ENCODE measurements at regions of chr13 and their contacts with region 1.

Region 1: GRCh38 chr13:27251166-27252091 is at the start of gene RPL21:
- DNase-seq: peak; percentile 86
- H3K4me3 Mint-ChIP-seq: peak within 1 kb of the TSS; percentile 98
- H3K27ac Mint-ChIP-seq: peak within 1 kb of the TSS; percentile 99
- H3K4me1 Mint-ChIP-seq: peaks cover 35% of the 10 kb centered on the region
- H3K27me3 Mint-ChIP-seq: no peaks in the 10 kb centered on the region
- total RNA-seq, gene RPL21: 1,112 and 1,127 TPM in 2 replicates

Region 2: GRCh38 chr13:27043013-27043412 is 208.4 kb before region 1 on chr13:
- intact Hi-C with region 1: loop called (anchors 10 kb)
- DNase-seq: no peak
- H3K4me3 Mint-ChIP-seq: no peak overlapping the region
- H3K27ac Mint-ChIP-seq: no peak overlapping the region
- H3K4me1 Mint-ChIP-seq: peaks cover 28% of the 10 kb centered on the region
- H3K27me3 Mint-ChIP-seq: no peaks in the 10 kb centered on the region

Region 3: GRCh38 chr13:27203854-27204253 is 47.6 kb before region 1 on chr13:
- intact Hi-C with region 1: loop called (anchors 5 kb)
- DNase-seq: no peak
- H3K4me3 Mint-ChIP-seq: no peak overlapping the region
- H3K27ac Mint-ChIP-seq: no peak overlapping the region
- H3K4me1 Mint-ChIP-seq: peaks cover 12% of the 10 kb centered on the region
- H3K27me3 Mint-ChIP-seq: no peaks in the 10 kb centered on the region

Region 4: GRCh38 chr13:27424246-27425157 is 173.1 kb after region 1 on chr13 and contains the start of gene GTF3A:
- intact Hi-C with region 1: loop called (anchors 1 kb)
- DNase-seq: peak; percentile 86
- H3K4me3 Mint-ChIP-seq: peak within 1 kb of the TSS; percentile 89
- H3K27ac Mint-ChIP-seq: peak within 1 kb of the TSS; percentile 94
- H3K4me1 Mint-ChIP-seq: peaks cover 36% of the 10 kb centered on the region
- H3K27me3 Mint-ChIP-seq: no peaks in the 10 kb centered on the region
- total RNA-seq, gene GTF3A: 251 and 253 TPM in 2 replicates

Region 5: GRCh38 chr13:27620377-27621115 is 369.1 kb after region 1 on chr13 and contains the start of gene LNX2:
- intact Hi-C with region 1: loop called (anchors 5 kb)
- DNase-seq: peak; percentile 95
- H3K4me3 Mint-ChIP-seq: peak within 1 kb of the TSS; percentile 90
- H3K27ac Mint-ChIP-seq: peak within 1 kb of the TSS; percentile 88
- H3K4me1 Mint-ChIP-seq: peaks cover 47% of the 10 kb centered on the region
- H3K27me3 Mint-ChIP-seq: no peaks in the 10 kb centered on the region
- total RNA-seq, gene LNX2: 5.2 and 5.4 TPM in 2 replicates